ENCODE measurements at regions of chr2 and their contacts with region 1.

Region 1: DNA sequence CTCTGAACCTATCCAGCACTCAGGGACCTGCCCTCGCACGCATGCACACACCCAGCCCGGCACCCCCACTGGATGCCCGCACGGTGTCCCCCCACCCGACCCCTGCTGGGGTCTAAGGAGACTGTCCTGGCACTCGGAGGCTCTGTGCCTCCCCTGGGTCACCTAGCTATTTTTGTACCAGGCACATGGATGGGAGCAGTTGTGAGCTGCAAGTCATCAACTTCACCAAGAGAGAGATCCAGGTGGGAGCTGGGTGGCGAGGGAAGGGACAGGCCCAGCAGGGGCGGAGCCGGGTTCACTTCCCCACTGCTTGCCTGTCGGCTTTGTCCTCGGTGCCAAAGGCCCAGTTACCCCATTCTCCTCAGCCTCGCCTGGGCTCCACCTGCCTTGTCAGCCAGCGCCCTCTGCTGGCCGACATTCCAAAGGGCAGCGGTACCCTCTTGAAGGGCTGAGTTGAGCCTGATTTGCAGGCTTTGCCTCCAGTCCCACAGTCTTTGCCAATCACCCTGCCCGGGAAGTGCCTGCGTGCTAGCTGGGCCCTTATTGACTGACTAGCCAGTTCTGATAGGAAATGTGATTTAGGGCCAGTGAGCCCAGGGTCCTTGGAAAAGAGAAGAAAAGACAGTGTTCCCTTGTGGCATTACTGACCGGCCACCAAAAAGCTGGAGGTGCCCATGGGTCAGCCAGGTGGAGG is 5.8 kb downstream of the NT5DC4 start:
- DNase-seq: peak; percentile 92 to 93
- ATAC-seq: peak; percentile 84 to 95
- H3K4me3 ChIP-seq: no peak overlapping the region
- H3K27ac ChIP-seq: peak overlapping the region; percentile 81 to 86
- H3K4me1 ChIP-seq: peaks cover 21% of the 10 kb centered on the region
- CTCF ChIP-seq: peak; percentile 97
- EP300 ChIP-seq: no peak
- POLR2A ChIP-seq: no peak
- RAD21 ChIP-seq: peak; percentile 99 to 100

Region 2: GRCh38 chr2:112542123-112542983 is 184.3 kb before region 1 on chr2 and contains the start of gene POLR1B:
- CTCF ChIA-PET with region 1: interaction called, 14 read pairs
- POLR2A ChIA-PET with region 1: no interaction called
- DNase-seq: peak; percentile 81 to 92
- ATAC-seq: peak; percentile 96 to 97
- H3K4me3 ChIP-seq: peak within 1 kb of the TSS; percentile 96
- H3K27ac ChIP-seq: peak within 1 kb of the TSS; percentile 85 to 96
- H3K4me1 ChIP-seq: peaks cover 29% of the 10 kb centered on the region; the same call in 2 of the 3 replicates
- CTCF ChIP-seq: no peak
- EP300 ChIP-seq: no peak
- POLR2A ChIP-seq: peak; percentile 77
- RAD21 ChIP-seq: no peak
- polyA plus RNA-seq, gene POLR1B: 41.2 and 50.7 TPM in 2 replicates

Region 3: GRCh38 chr2:112606488-112606902 is 120.1 kb before region 1 on chr2:
- CTCF ChIA-PET with region 1: interaction called, 230 read pairs
- POLR2A ChIA-PET with region 1: no interaction called
- DNase-seq: no peak
- ATAC-seq: peak; percentile 44 to 59; a peak in 4 of 6 replicates
- H3K4me3 ChIP-seq: no peak overlapping the region
- H3K27ac ChIP-seq: peak overlapping the region in 1 of 2 experiments; percentile 22; a peak in 1 of 6 replicates
- H3K4me1 ChIP-seq: no peaks in the 10 kb centered on the region
- CTCF ChIP-seq: no peak
- EP300 ChIP-seq: no peak
- POLR2A ChIP-seq: no peak
- RAD21 ChIP-seq: no peak

Region 4: DNA sequence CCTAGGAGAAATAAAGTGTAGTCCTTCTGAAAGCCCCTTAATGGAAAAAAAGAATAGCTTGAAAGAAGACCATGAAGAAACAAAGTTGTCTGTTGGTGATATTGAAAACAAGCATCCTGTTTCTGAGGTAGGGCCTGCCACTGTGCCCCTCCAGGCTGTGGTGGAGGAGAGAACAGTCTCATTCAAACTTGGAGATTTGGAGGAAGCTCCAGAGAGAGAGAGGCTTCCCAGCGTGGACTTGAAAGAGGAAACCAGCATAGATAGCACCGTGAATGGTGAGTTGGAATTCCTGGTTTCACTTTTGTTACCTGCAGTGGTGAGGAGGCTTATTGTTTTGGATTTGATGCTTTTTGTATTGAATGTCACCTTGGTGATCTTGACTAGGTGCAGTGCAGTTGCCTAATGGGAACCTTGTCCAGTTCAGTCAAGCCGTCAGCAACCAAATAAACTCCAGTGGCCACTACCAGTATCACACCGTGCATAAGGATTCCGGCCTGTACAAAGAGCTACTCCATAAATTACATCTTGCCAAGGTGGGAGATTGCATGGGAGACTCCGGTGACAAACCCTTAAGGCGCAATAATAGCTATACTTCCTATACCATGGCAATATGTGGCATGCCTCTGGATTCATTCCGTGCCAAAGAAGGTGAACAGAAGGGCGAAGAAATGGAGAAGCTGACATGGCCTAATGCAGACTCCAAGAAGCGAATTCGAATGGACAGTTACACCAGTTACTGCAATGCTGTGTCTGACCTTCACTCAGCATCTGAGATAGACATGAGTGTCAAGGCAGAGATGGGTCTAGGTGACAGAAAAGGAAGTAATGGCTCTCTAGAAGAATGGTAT is 67.6 kb before region 1 on chr2:
- CTCF ChIA-PET with region 1: interaction called, 82 read pairs
- POLR2A ChIA-PET with region 1: no interaction called
- DNase-seq: peak in 1 of 2 experiments; percentile 41
- ATAC-seq: peak; percentile 68 to 73
- H3K4me3 ChIP-seq: no peak overlapping the region
- H3K27ac ChIP-seq: no peak overlapping the region
- H3K4me1 ChIP-seq: peaks cover 45% of the 10 kb centered on the region
- CTCF ChIP-seq: no peak
- EP300 ChIP-seq: no peak
- POLR2A ChIP-seq: no peak
- RAD21 ChIP-seq: no peak

Region 5: DNA sequence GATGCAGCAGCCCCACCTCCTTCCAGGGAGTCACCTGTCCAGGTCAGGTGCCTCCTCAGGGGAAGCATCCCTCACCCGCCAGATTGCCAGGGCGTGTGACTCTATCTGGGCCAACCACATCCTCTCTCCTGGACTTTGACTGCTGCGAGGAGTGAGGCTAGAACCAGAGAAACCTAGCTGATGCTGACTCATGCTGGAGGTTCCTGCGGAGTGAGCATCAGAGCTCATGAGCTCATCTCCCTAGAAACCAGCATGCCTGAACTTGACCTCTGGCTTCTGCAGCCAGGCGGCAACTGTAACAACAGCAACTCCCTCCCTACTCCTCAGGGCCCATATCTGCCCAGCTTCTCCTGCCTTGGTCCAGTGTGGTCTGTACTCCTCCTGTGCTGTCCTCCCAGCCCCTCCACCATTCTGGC is 34.1 kb before region 1 on chr2:
- CTCF ChIA-PET with region 1: interaction called, 116 read pairs
- POLR2A ChIA-PET with region 1: no interaction called
- DNase-seq: peak; percentile 80 to 97
- ATAC-seq: peak; percentile 95 to 97
- H3K4me3 ChIP-seq: no peak overlapping the region
- H3K27ac ChIP-seq: peak overlapping the region; percentile 93 to 94
- H3K4me1 ChIP-seq: peaks cover 46% of the 10 kb centered on the region
- CTCF ChIP-seq: no peak
- EP300 ChIP-seq: peak in 1 of 2 experiments; percentile 45; a peak in 1 of 5 replicates
- POLR2A ChIP-seq: no peak
- RAD21 ChIP-seq: no peak; a peak in 1 of 5 replicates

Region 6: DNA sequence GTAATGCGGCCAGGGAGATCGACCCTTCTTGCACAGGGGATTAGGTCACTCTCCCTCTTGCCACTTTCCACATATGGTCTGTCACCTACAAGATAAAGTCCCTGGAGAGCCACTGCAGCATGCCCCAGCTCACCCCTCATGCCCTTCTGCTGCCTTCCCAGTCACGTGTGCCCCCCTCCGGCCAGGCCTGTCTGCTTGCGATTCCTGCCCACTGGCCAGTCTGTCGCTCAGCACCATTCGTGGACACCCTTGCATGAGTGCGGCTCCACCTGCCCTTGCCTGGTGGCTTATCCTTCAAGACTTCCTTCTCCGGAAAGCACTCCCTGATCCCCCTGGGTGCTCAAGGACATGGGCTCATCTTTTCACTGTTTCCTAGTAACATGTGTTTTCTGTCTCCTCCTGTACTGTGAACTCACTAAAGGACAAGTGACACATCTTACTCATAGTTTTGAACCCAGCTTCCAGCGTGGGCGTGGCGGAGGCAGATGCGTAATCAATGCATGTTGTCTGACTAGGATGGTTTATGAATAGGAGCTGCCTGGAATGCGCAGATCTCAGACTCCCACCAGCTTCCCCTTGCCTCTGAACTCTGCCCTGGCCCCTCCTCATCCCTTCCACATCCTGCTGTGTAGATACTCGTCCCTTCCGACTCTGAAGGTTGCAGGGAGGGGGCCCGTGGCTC is 13.6 kb before region 1 on chr2:
- CTCF ChIA-PET with region 1: interaction called, 55 read pairs
- POLR2A ChIA-PET with region 1: no interaction called
- DNase-seq: peak in 1 of 2 experiments; percentile 45
- ATAC-seq: peak; percentile 6 to 28; a peak in 4 of 6 replicates
- H3K4me3 ChIP-seq: no peak overlapping the region
- H3K27ac ChIP-seq: 0 out of 6 replicates have a peak overlapping the region, but pooled peaks of 1 of the 2 experiments have one; percentile 47
- H3K4me1 ChIP-seq: peaks cover 17% of the 10 kb centered on the region
- CTCF ChIP-seq: no peak
- EP300 ChIP-seq: no peak
- POLR2A ChIP-seq: no peak
- RAD21 ChIP-seq: no peak

Region 7: GRCh38 chr2:112768432-112768831 is 41.8 kb after region 1 on chr2:
- CTCF ChIA-PET with region 1: no interaction called
- POLR2A ChIA-PET with region 1: no interaction called
- DNase-seq: peak in 1 of 2 experiments; percentile 50
- ATAC-seq: no peak
- H3K4me3 ChIP-seq: no peak overlapping the region
- H3K27ac ChIP-seq: no peak overlapping the region
- H3K4me1 ChIP-seq: peaks cover 14% of the 10 kb centered on the region; the same call in 2 of the 3 replicates
- CTCF ChIP-seq: no peak
- EP300 ChIP-seq: no peak
- POLR2A ChIP-seq: no peak
- RAD21 ChIP-seq: no peak

Region 8: DNA sequence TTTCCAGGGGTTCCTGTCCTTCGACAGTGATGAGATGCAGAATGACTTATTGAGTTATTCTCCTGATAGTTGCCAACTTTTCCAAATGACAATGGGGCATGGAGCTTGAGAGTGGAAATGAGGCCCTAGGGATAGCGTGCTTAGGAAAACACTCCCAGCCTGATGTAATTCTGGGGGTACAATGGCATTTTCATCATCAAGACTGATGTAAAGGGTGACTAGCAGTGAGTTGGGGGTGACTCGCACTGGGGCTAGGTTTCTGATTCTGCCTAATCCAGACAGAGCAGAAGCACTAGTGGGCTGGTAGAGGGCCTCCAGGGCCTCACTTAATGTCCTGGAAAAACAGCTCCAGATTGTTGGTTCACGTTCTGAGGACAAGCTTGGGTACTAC is 150.3 kb after region 1 on chr2:
- CTCF ChIA-PET with region 1: no interaction called
- POLR2A ChIA-PET with region 1: no interaction called
- DNase-seq: no peak
- ATAC-seq: no peak
- H3K4me3 ChIP-seq: no peak overlapping the region
- H3K27ac ChIP-seq: no peak overlapping the region
- H3K4me1 ChIP-seq: no peaks in the 10 kb centered on the region
- CTCF ChIP-seq: no peak
- EP300 ChIP-seq: no peak
- POLR2A ChIP-seq: no peak
- RAD21 ChIP-seq: no peak

Region 9: GRCh38 chr2:112916145-112916571 is 189.5 kb after region 1 on chr2:
- CTCF ChIA-PET with region 1: no interaction called
- POLR2A ChIA-PET with region 1: no interaction called
- DNase-seq: no peak
- ATAC-seq: no peak
- H3K4me3 ChIP-seq: no peak overlapping the region
- H3K27ac ChIP-seq: no peak overlapping the region
- H3K4me1 ChIP-seq: no peaks in the 10 kb centered on the region
- CTCF ChIP-seq: no peak
- EP300 ChIP-seq: no peak
- POLR2A ChIP-seq: no peak
- RAD21 ChIP-seq: no peak